Astrocyte of the cerebellum (primary cell): ENCODE measurements at regions of chr12 and their contacts with region 1.

Region 1: DNA sequence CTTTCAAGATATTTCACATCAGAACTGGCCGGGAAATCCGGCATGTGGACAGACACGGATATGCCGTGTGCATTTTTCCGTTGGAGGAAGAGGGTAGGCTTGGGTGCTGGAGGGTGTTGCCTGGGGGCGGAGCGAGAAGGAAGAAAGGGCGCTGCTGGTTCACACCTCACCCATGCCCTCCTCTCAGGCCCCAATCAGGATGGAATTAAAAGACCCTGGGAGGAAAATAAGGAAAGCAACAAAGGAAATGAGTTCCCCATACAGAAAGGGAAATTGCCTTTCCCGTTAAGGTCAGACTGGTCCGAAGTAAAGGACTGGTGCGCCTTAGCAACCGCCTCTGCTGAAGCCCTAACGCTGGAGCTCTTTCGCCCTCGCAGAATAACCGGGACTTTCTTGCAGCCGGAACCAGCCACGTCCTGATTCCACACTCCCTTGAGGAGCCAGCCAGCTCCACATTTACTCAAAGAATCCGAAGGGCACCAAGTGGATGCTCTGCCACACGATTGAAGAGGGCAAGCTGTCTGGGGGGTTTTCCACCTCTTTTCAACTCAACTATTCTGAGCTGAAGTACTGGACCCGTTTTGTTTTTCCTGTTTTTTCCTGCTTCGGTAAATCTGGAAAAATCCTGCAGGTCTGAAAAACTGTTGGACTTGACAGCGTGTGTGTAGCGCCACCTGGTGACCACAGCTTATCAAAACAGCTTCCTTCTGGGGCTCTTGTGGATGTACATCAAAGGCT is 37.7 kb upstream of the BCL2L14 start:
- DNase-seq: peak; percentile 87
- H3K4me3 ChIP-seq: peak overlapping the region; percentile 28
- CTCF ChIP-seq: peak; percentile 85

Region 2: GRCh38 chr12:11581179-11581755 is 451.8 kb before region 1 on chr12:
- in situ Hi-C with region 1: loop called (anchors 25 kb)
- DNase-seq: peak; percentile 77
- H3K4me3 ChIP-seq: no peak overlapping the region
- CTCF ChIP-seq: peak; percentile 19

Region 3: GRCh38 chr12:11939223-11939622 is 93.8 kb before region 1 on chr12:
- in situ Hi-C with region 1: no loop called
- DNase-seq: no peak
- H3K4me3 ChIP-seq: no peak overlapping the region
- CTCF ChIP-seq: no peak